Left cardiac atrium (tissue), 4 donors: ENCODE measurements at regions of chr3 and their contacts with region 1.

Region 1: GRCh38 chr3:123046262-123047061 is 18.9 kb upstream of the SEMA5B start:
- DNase-seq: no peak
- ATAC-seq: no peak

Region 2: DNA sequence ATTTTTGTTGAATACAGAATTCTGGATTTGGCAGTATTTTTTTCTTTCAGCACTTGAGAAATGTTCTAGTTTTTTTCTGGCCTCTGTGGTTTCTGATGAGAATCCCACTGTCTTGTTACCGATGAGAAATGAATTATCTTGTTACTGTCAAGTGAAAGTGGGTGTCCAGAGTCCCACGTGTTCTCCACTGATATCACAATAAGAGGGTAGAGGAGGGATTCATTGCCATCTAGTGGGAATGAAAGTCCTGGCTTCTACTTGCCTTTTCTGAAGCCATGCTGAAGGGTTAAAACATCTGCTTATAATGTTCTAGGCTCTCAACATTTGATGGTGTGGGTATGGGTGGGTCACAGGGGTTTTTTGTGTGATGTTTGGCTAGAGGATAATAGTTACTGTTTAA is 221.4 kb after region 1 on chr3:
- intact Hi-C with region 1: loop called in 1 of 2 experiments (anchors 10 kb)
- DNase-seq: no peak
- ATAC-seq: no peak